Naive thymus-derived CD4-positive, alpha-beta T cell (primary cell): ENCODE measurements at regions of chr12 and their contacts with region 1.

Region 1: GRCh38 chr12:69738351-69739286 is at the start of gene RAB3IP:
- DNase-seq: peak; percentile 85 to 97 (median 90)
- ATAC-seq: peak; percentile 96
- H3K4me3 ChIP-seq: peak within 1 kb of the TSS; percentile 82
- H3K4me3 Mint-ChIP-seq: peak within 1 kb of the TSS; percentile 84 to 95 (median 89)
- H3K27ac ChIP-seq: peak within 1 kb of the TSS; percentile 78
- H3K27ac Mint-ChIP-seq: peak within 1 kb of the TSS; percentile 71 to 92 (median 81)
- H3K4me1 ChIP-seq: peaks cover 0 to 8% of the 10 kb centered on the region in 2 donors
- H3K4me1 Mint-ChIP-seq: peaks cover 14 to 37% (median 30%) of the 10 kb centered on the region in 7 donors
- H3K27me3 ChIP-seq: no peaks in the 10 kb centered on the region
- H3K27me3 Mint-ChIP-seq: peaks cover 0 to 40% (median 6%) of the 10 kb centered on the region in 5 donors
- total RNA-seq, gene RAB3IP: 23.5 to 29.7 (median 23.7) TPM

Region 2: DNA sequence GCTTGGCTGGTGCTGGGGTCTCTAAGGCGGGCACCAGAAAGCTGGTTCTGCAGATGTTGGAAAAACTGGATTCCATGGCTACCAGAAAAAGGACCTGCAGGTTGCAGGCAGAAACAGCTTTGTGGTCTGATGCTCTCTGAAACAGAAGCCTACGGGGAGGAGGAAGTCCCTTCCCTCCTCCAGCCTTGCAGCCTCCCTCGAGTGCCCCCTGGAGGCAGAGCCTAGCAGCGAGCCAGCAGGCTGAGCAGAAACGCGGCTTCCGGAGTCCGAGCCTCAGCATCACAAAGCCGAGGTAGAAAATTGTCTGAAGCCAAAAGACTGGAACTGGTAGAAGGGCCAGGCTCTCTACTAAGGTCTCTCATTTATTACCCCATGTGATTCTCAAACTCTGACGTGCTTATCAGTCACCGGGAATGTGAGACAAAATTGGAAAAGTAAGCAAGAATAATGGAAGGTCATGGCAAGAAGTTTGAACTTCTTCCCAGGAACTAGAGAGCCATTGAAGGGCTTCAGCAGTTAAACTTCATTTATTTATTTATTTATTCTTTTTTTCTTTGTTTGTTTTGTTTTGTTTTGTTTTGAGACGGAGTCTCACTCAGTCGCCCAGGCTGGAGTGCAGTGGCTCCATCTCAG is 581.5 kb before region 1 on chr12:
- CTCF ChIA-PET with region 1: no interaction called
- POLR2A ChIA-PET with region 1: no interaction called
- intact Hi-C with region 1: loop called in 1 of 2 experiments (anchors 5 kb)
- DNase-seq: peak; percentile 71 to 93 (median 83)
- ATAC-seq: peak; percentile 97
- H3K4me3 ChIP-seq: peak overlapping the region; percentile 45
- H3K4me3 Mint-ChIP-seq: peak overlapping the region in 8 of 10 donors; percentile 47 to 75 (median 67)
- H3K27ac ChIP-seq: no peak overlapping the region
- H3K27ac Mint-ChIP-seq: peak overlapping the region in 2 of 9 donors; percentile 6 to 65
- H3K4me1 ChIP-seq: peaks cover 0 to 6% of the 10 kb centered on the region in 2 donors
- H3K4me1 Mint-ChIP-seq: peaks cover 8 to 34% (median 31%) of the 10 kb centered on the region in 7 donors
- H3K27me3 ChIP-seq: no peaks in the 10 kb centered on the region
- H3K27me3 Mint-ChIP-seq: no peaks in the 10 kb centered on the region

Region 3: DNA sequence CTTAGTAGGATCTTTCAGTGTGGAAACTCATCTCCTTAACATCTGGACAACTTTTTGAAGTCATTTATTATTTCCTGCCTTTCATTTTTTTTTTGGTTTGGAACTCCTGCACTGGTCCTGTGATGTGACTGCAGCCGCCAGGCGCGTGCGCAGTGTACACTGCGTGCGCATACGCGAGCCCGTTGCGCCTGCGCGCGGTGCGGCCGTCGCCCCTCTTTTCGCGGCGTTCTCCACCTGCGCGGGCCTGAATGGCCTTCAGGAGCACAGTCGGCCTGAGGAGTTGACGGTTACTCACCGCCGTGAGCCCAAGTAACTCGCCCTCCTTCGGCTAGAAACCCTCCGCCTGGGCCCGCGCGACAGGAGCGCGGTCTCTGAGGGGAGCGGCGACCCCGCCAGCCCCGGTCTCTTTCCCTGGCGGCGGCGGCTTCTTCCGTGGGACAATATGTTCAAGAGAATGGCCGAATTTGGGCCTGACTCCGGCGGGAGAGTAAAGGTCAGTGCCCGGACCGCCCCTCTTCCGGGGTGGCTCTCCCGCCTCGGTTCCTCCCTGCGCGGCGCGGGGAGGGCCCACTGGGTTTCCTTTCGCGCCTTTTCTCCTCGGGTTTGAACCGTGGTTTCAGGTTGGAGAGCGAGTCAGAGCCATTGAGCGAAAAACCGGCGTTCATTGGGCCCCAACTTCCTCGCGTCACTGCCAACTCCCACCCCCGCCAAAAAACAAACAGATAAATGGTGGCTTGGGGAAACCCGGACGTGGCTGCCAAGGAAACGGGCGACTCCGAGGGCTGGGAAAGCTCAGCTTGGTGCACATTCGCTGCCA is 378.9 kb before region 1 on chr12 and contains the start of gene YEATS4:
- CTCF ChIA-PET with region 1: no interaction called
- POLR2A ChIA-PET with region 1: no interaction called
- intact Hi-C with region 1: loop called (anchors 1 to 2 kb)
- DNase-seq: peak; percentile 73 to 93 (median 84)
- ATAC-seq: peak; percentile 86
- H3K4me3 ChIP-seq: peak within 1 kb of the TSS; percentile 76
- H3K4me3 Mint-ChIP-seq: peak within 1 kb of the TSS; percentile 82 to 93 (median 89)
- H3K27ac ChIP-seq: peak within 1 kb of the TSS; percentile 93
- H3K27ac Mint-ChIP-seq: peak within 1 kb of the TSS; percentile 80 to 96 (median 91)
- H3K4me1 ChIP-seq: peaks cover 5 to 6% of the 10 kb centered on the region in 2 donors
- H3K4me1 Mint-ChIP-seq: peaks cover 11 to 32% (median 25%) of the 10 kb centered on the region in 7 donors
- H3K27me3 ChIP-seq: no peaks in the 10 kb centered on the region
- H3K27me3 Mint-ChIP-seq: peaks cover 0 to 3% (median 0%) of the 10 kb centered on the region in 5 donors
- total RNA-seq, gene YEATS4: 16.5 to 34.9 (median 21.4) TPM

Region 4: DNA sequence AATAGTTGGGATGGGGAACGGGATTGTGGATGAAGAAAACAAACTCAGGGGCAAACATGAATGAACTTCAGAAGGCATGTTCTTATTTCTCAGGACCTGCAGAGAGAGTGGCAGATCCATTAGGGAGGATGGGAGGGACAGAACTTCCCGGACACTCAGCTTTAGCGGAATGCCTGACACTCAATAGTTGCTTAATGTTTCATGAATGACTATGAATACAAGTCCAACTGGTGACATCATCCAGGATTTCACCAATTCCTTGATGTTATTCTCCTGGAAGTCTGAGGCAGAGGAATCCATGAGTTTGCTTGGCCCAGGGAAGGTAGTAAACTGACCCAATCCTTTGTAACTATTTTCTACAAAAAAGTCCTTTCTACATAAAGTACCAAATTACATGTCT is 90.1 kb before region 1 on chr12:
- CTCF ChIA-PET with region 1: no interaction called
- POLR2A ChIA-PET with region 1: no interaction called
- intact Hi-C with region 1: no loop called
- DNase-seq: no peak
- ATAC-seq: no peak
- H3K4me3 ChIP-seq: no peak overlapping the region
- H3K4me3 Mint-ChIP-seq: no peak overlapping the region
- H3K27ac ChIP-seq: no peak overlapping the region
- H3K27ac Mint-ChIP-seq: no peak overlapping the region
- H3K4me1 ChIP-seq: no peaks in the 10 kb centered on the region
- H3K4me1 Mint-ChIP-seq: no peaks in the 10 kb centered on the region
- H3K27me3 ChIP-seq: no peaks in the 10 kb centered on the region
- H3K27me3 Mint-ChIP-seq: peaks cover 4 to 12% (median 6%) of the 10 kb centered on the region in 5 donors

Region 5: DNA sequence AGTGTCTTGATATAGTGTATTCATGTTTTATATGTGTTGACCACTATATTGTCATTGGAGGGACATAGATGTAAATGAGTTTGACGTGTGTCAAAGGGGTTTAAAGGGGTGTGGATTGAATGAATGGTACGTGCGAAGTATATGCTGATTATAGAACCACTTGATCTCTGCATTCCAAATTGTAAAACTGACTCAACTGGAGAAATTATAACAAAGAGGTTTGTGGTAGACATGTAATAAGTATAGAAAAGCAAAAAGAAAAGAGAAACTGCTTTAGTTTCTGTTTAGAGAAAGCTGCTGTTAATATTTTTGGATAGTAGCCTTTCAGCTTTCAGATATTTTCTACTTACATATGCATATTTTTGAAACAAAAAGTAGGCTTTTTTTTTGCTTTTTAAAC is 77.5 kb after region 1 on chr12:
- CTCF ChIA-PET with region 1: no interaction called
- POLR2A ChIA-PET with region 1: no interaction called
- intact Hi-C with region 1: loop called in 1 of 2 experiments (anchors 5 kb)
- DNase-seq: no peak
- ATAC-seq: no peak
- H3K4me3 ChIP-seq: no peak overlapping the region
- H3K4me3 Mint-ChIP-seq: no peak overlapping the region
- H3K27ac ChIP-seq: no peak overlapping the region
- H3K27ac Mint-ChIP-seq: no peak overlapping the region
- H3K4me1 ChIP-seq: no peaks in the 10 kb centered on the region
- H3K4me1 Mint-ChIP-seq: peaks cover 0 to 3% (median 0%) of the 10 kb centered on the region in 7 donors
- H3K27me3 ChIP-seq: no peaks in the 10 kb centered on the region
- H3K27me3 Mint-ChIP-seq: no peaks in the 10 kb centered on the region

Region 6: GRCh38 chr12:69978020-69978419 is 239.4 kb after region 1 on chr12:
- CTCF ChIA-PET with region 1: no interaction called
- POLR2A ChIA-PET with region 1: no interaction called
- intact Hi-C with region 1: no loop called
- DNase-seq: no peak
- ATAC-seq: no peak
- H3K4me3 ChIP-seq: no peak overlapping the region
- H3K4me3 Mint-ChIP-seq: no peak overlapping the region
- H3K27ac ChIP-seq: no peak overlapping the region
- H3K27ac Mint-ChIP-seq: no peak overlapping the region
- H3K4me1 ChIP-seq: no peaks in the 10 kb centered on the region
- H3K4me1 Mint-ChIP-seq: no peaks in the 10 kb centered on the region
- H3K27me3 ChIP-seq: no peaks in the 10 kb centered on the region
- H3K27me3 Mint-ChIP-seq: peaks cover 0 to 25% (median 10%) of the 10 kb centered on the region in 5 donors

Region 7: DNA sequence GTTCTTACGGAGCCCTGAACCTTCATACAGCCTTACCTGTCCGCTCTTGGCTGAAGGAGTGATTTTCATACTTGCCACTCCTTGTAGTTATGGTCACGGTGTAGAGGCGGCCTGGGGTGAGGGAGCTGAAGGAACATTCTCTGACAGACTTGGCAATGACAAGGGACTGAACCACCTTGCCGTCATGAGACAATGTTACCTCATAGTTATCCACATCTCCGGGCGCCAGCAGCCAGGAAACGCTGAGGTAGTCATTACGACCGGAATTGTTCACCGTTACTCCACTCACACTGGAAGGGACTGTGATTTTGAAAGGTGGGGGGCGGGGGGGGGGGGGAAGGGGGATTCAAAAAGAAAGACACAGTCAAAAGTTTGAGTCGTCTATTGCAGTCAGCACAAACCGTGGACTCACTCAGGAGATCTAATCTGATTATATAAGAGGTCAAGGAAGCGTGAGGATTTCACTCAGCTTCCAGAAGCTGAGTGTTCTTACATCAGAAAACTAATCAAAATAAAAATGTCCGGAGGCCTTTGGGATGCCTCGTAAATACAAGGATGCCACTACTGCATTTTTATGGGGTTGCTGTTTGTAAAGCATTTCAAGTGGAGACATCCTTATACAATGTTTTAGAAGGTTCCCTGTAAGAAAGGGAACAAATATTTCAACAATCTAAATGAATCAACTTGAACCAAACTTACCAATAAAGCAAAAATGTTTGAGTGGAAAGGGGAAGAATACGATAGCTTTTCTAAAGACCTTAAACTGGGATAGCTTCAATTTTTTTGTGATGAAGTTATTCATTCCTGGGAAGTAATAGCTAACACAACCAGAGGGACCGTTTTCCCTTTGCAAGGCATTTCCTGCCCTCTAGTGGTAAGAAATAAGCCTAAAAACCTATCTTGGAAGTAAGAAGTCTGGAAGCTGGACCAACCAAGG is 838.0 kb after region 1 on chr12:
- CTCF ChIA-PET with region 1: no interaction called
- POLR2A ChIA-PET with region 1: no interaction called
- intact Hi-C with region 1: loop called (anchors 2 kb)
- DNase-seq: peak in 6 of 9 donors; percentile 24 to 54 (median 47)
- ATAC-seq: no peak
- H3K4me3 ChIP-seq: no peak overlapping the region
- H3K4me3 Mint-ChIP-seq: no peak overlapping the region
- H3K27ac ChIP-seq: no peak overlapping the region
- H3K27ac Mint-ChIP-seq: no peak overlapping the region
- H3K4me1 ChIP-seq: no peaks in the 10 kb centered on the region
- H3K4me1 Mint-ChIP-seq: no peaks in the 10 kb centered on the region
- H3K27me3 ChIP-seq: no peaks in the 10 kb centered on the region
- H3K27me3 Mint-ChIP-seq: peaks cover 0 to 18% (median 7%) of the 10 kb centered on the region in 5 donors